ENCODE measurements at regions of chr5 and their contacts with region 1.

Region 1: GRCh38 chr5:68215208-68215897 is at the start of gene PIK3R1:
- DNase-seq: peak; percentile 96
- CTCF ChIP-seq: peak; percentile 5

Region 2: DNA sequence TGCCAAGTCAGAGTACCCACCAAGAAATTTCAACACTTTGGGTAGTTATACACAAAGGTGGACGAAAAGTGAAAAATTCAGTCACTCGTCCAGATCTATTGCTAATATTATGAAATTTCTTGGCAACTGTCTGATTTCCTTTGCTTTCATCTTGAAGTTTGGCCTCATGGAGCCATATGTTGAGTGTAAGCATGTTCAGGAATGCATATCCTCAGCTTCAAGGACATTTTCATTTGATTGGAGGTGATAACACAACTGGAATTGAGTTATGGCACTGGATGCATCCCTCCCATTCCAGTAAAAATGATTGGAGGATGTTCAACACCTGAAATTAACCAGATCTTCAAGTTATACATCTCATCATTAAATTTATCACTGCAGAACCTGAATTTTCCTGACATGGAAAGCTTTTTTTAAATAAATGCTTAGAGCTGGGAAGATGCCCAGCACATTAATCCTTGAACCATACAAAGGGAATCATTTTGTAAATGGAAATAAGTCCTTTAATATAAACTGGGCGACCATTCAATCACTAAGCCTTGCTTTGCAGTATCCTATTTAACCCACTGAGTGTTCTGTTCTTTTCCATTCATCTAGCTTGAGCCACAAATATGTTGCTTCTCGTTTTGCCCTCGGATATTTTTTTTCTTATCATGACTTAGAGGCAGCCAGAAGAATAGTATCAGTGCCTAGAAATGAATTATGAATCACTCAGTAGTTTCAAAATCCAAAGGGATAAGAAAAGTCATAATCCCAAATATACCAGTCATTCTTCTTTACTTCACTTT is 273.5 kb before region 1 on chr5:
- CTCF ChIA-PET with region 1: no interaction called
- POLR2A ChIA-PET with region 1: no interaction called
- DNase-seq: no peak
- CTCF ChIP-seq: no peak

Region 3: GRCh38 chr5:68193481-68194036 is 21.8 kb before region 1 on chr5:
- CTCF ChIA-PET with region 1: interaction called, 10 read pairs
- POLR2A ChIA-PET with region 1: no interaction called
- DNase-seq: no peak
- CTCF ChIP-seq: no peak

Region 4: GRCh38 chr5:68229416-68229815 is 14.1 kb after region 1 on chr5:
- CTCF ChIA-PET with region 1: interaction called, 15 read pairs
- POLR2A ChIA-PET with region 1: interaction called, 4 read pairs
- DNase-seq: no peak
- CTCF ChIP-seq: no peak

Region 5: GRCh38 chr5:68252673-68253623 is 37.6 kb after region 1 on chr5:
- CTCF ChIA-PET with region 1: interaction called, 10 read pairs
- POLR2A ChIA-PET with region 1: interaction called, 3 read pairs
- DNase-seq: peak; percentile 49
- CTCF ChIP-seq: peak; percentile 74

Measured in GM10248 (cell line).